HEK293 (cell line): ENCODE measurements at regions of chr9 and their contacts with region 1.

Region 1: DNA sequence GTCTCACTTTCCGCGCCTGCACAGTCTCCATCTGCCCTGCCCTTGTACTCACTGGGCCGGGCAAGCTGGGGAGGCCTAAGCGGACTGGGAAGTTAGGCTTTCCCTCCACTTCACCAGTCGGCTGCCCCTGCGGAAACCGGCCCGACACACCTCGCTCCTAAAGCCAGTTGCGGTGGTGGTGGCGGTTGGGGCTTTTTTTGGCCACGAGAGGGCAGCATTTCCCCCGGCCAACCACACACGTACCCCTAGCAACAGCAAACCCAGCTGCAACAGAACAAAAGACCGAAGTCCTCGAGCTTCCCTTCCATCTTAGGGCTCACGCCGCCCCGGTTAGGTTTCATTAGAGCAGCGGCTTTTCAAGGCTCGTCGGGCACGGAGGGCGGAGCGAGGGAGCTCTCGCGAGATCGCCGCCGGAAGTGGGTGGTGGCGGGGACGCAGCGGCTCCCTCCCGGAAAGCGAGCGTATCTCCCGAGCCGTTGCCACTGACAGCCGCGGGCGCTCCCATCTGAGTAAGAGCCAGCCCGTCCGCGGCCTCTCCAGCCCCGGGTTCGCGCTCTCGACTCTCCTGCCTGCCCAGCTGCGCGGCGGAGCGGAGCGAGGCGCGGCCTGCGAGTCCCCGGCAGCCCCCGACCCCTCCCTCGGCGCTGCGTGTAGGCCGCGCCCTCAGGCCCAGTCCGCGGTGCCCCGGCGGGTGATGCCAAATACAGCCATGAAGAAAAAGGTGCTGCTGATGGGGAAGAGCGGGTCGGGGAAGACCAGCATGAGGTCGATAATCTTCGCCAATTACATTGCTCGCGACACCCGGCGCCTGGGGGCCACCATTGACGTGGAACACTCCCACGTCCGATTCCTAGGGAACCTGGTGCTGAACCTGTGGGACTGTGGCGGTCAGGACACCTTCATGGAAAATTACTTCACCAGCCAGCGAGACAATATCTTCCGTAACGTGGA is at the start of gene RRAGA:
- H3K4me3 ChIP-seq: peak within 1 kb of the TSS; percentile 75
- H3K27ac ChIP-seq: peak within 1 kb of the TSS; percentile 92
- H3K4me1 ChIP-seq: no peaks in the 10 kb centered on the region
- CTCF ChIP-seq: peak; percentile 95

Region 2: GRCh38 chr9:19174127-19174912 is 125.1 kb after region 1 on chr9:
- CTCF ChIA-PET with region 1: interaction called, 21 read pairs
- POLR2A ChIA-PET with region 1: interaction called, 8 read pairs
- H3K4me3 ChIP-seq: no peak overlapping the region
- H3K27ac ChIP-seq: no peak overlapping the region
- H3K4me1 ChIP-seq: no peaks in the 10 kb centered on the region
- CTCF ChIP-seq: peak; percentile 64; the same call in 1 of the 2 replicates

Region 3: DNA sequence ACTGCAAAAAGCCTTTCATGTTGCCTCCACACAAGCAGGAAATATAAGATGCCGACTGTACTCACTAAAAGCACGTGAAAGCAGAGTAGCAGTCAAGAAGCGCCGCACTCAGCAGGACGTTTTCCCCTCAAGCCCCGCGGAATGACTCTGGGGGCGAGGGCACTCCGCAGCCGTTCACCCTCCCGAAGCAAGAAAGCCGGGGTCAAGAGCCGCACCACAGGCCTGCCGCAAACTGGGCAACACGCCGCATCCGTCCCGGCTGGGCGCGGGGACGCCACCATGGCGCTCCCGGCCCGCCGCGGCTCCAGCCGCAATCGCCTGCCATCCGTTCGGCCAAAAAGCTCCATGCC is 330.4 kb after region 1 on chr9:
- CTCF ChIA-PET with region 1: interaction called, 3 read pairs
- POLR2A ChIA-PET with region 1: interaction called, 14 read pairs
- H3K4me3 ChIP-seq: peak overlapping the region; percentile 74
- H3K27ac ChIP-seq: peak overlapping the region; percentile 99
- H3K4me1 ChIP-seq: no peaks in the 10 kb centered on the region
- CTCF ChIP-seq: no peak

Region 4: DNA sequence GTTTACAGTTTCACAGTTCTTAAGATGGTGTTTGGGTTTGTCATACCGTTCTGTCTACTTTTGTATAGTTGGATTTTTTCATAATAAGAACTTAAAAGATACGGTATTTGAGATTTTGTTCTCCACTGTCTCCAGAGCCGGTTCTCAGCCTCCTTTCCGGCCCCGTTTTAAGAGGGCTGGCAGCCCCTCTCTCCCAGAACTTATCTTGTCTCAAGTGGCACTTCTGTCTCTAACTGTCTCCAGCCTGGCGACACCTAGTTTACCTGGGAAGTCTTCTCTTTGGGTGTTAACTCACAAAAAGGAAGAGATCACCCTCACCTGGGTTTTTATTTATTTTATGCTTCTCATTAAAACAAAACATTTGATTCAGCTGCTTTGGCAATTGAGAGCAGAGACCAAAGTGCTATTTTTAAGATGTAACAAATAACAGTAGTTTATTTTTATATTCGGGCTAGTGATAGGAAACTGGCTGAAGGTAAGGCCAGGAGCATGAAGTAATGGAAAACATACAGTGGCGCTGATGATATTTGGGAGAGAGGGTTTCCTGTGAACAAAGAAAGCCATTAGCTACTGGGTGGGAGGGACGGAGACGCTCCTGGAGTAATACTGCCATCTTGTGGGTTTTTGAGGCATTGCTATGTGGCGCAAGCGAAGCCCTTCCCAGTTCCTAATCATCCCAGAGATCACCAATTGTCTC is 407.9 kb after region 1 on chr9:
- CTCF ChIA-PET with region 1: interaction called, 30 read pairs
- POLR2A ChIA-PET with region 1: interaction called, 6 read pairs
- H3K4me3 ChIP-seq: no peak overlapping the region
- H3K27ac ChIP-seq: no peak overlapping the region
- H3K4me1 ChIP-seq: no peaks in the 10 kb centered on the region; the same call in 1 of the 2 replicates
- CTCF ChIP-seq: peak; percentile 77